H1 (cell line): ENCODE measurements at regions of chr21 and their contacts with region 1.

Region 1: DNA sequence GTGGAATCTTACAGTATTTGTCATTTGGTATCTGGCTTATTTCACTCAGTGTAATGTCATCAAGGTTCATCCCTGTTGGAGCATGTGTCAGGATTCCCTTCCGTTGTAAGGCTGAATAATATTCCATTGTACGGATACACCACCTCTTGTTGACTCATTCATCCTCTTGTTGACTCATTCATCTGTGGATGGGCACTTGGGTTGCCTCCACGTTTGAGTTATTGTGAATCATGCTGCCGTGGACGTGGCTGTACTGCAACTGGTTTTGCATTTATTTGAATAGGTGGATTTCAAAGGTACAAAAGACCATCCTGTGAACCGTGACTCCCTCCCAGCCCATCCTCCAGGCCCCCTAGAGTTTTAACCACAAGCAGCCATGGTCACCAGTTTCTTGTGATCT is 11.9 kb upstream of the TCP10L start:
- DNase-seq: no peak
- H3K4me3 ChIP-seq: no peak overlapping the region
- H3K27ac ChIP-seq: no peak overlapping the region
- H3K4me1 ChIP-seq: peaks cover 0 to 8% (median under 1%) of the 10 kb centered on the region in 4 experiments; a peak in 5 of 7 replicates
- H3K27me3 ChIP-seq: no peaks in the 10 kb centered on the region
- CTCF ChIP-seq: no peak
- EP300 ChIP-seq: no peak
- POLR2A ChIP-seq: no peak
- RAD21 ChIP-seq: no peak

Region 2: DNA sequence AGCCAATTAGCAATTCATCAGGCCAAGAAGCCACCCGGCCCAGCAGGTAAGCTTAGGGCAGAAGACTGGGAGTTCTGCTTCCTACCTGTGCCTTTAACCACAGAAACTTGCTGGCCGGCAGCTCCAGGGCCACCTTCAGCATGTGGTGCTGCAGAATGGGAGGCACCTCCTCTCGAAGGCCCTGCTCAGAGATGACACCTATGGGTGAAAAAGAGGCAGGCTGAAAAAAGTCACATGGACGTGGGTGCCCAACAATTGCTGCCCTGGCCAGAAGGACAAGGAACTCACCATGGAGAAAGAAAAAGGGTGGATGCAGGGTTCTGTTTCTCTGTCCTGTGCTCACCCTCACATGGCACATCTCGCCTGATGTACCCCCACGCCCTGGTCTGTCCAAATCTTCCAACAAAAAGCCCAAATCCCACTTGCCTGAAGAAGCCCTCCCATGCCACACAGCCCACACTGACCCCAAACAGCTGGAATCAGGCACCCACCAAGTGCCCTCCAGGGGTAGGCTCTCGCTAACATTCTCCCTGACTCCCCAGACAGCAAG is 237.4 kb before region 1 on chr21:
- CTCF ChIA-PET with region 1: interaction called, 11 read pairs
- POLR2A ChIA-PET with region 1: no interaction called
- DNase-seq: no peak
- H3K4me3 ChIP-seq: no peak overlapping the region
- H3K27ac ChIP-seq: no peak overlapping the region
- H3K4me1 ChIP-seq: no peaks in the 10 kb centered on the region
- H3K27me3 ChIP-seq: no peaks in the 10 kb centered on the region
- CTCF ChIP-seq: peak in 1 of 3 experiments; percentile 2; a peak in 1 of 4 replicates
- EP300 ChIP-seq: no peak
- POLR2A ChIP-seq: no peak
- RAD21 ChIP-seq: no peak

Region 3: GRCh38 chr21:32392880-32393676 is 204.1 kb before region 1 on chr21 and contains the start of gene URB1:
- CTCF ChIA-PET with region 1: interaction called, 10 read pairs
- POLR2A ChIA-PET with region 1: interaction called, 4 read pairs
- DNase-seq: peak; percentile 34 to 97
- H3K4me3 ChIP-seq: peak within 1 kb of the TSS; percentile 79 to 87 (median 81)
- H3K27ac ChIP-seq: no peak within 1 kb of the TSS
- H3K4me1 ChIP-seq: peaks cover 0 to 6% (median 5%) of the 10 kb centered on the region in 4 experiments
- H3K27me3 ChIP-seq: peaks cover 0 to 7% (median 6%) of the 10 kb centered on the region in 4 experiments; a peak in 5 of 7 replicates
- CTCF ChIP-seq: no peak
- EP300 ChIP-seq: no peak
- POLR2A ChIP-seq: peak in 1 of 2 experiments; percentile 68; a peak in 2 of 3 replicates
- RAD21 ChIP-seq: no peak
- total RNA-seq, gene URB1: 28.2 and 28.9 TPM in 2 replicates

Region 4: DNA sequence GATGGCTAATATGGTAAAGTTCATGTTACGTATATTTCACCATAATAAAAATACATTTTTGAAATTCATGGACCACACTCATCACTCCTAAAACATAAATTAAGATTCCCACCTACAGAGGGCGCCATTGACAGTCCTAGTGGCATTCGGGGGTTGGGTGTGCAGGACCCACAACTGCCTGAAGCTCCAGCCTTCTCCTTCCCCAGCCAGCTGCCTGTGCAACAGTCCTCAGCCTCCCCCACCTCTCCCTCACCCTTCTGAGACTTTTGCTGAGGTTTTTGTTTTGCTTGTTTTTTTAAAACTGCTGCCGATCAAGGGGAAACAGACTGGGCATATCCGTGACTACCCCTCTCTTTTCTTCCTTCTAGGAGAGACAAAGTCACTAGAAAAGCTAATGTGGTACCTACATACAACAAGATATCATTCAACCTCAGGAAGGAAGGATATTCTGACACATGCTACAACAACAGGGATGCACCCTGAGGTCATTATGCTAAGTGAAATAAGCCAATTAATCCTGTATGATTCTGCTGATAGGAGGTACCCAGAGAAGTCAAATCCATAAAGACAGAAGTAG is 193.9 kb before region 1 on chr21:
- CTCF ChIA-PET with region 1: interaction called, 68 read pairs
- POLR2A ChIA-PET with region 1: no interaction called
- DNase-seq: peak in 1 of 2 experiments; percentile 63
- H3K4me3 ChIP-seq: no peak overlapping the region
- H3K27ac ChIP-seq: no peak overlapping the region
- H3K4me1 ChIP-seq: no peaks in the 10 kb centered on the region; a peak in 1 of 7 replicates
- H3K27me3 ChIP-seq: no peaks in the 10 kb centered on the region
- CTCF ChIP-seq: peak; percentile 69 to 85 (median 82)
- EP300 ChIP-seq: no peak
- POLR2A ChIP-seq: no peak
- RAD21 ChIP-seq: peak; percentile 85 to 87

Region 5: GRCh38 chr21:32578107-32578692 is 19.0 kb before region 1 on chr21:
- CTCF ChIA-PET with region 1: interaction called, 24 read pairs
- POLR2A ChIA-PET with region 1: interaction called, 3 read pairs
- DNase-seq: peak; percentile 23 to 70
- H3K4me3 ChIP-seq: no peak overlapping the region
- H3K27ac ChIP-seq: no peak overlapping the region
- H3K4me1 ChIP-seq: no peaks in the 10 kb centered on the region
- H3K27me3 ChIP-seq: no peaks in the 10 kb centered on the region
- CTCF ChIP-seq: peak; percentile 75 to 94 (median 79)
- EP300 ChIP-seq: no peak
- POLR2A ChIP-seq: no peak
- RAD21 ChIP-seq: peak; percentile 79 to 84

Region 6: DNA sequence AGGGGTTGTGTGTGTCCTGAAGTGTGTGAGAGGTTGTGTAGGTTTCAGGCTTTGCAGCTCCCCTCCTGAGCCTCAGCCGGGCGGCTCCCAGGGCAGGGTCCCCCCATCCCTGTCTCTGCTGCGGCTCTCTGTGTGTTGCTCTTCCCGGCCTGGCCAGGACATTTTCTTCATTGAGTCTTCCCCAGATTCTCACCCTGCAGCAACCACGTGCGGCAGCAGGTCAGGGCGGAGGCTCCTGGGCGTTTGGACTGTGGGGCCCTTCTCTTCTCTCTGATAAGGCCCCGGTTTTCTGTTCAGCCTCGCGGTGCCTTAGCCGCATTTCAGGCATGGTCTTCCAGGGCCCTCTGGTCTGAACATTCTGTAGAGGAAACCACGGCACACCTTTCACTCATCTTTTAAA is 10.1 kb before region 1 on chr21:
- CTCF ChIA-PET with region 1: interaction called, 41 read pairs
- POLR2A ChIA-PET with region 1: interaction called, 6 read pairs
- DNase-seq: no peak
- H3K4me3 ChIP-seq: no peak overlapping the region
- H3K27ac ChIP-seq: no peak overlapping the region
- H3K4me1 ChIP-seq: 0 out of 7 replicates have a peak, but pooled peaks cover 0 to 2% (median 0%) of the 10 kb centered on the region in 4 experiments
- H3K27me3 ChIP-seq: no peaks in the 10 kb centered on the region; a peak in 1 of 7 replicates
- CTCF ChIP-seq: no peak
- EP300 ChIP-seq: no peak
- POLR2A ChIP-seq: no peak
- RAD21 ChIP-seq: no peak

Region 7: DNA sequence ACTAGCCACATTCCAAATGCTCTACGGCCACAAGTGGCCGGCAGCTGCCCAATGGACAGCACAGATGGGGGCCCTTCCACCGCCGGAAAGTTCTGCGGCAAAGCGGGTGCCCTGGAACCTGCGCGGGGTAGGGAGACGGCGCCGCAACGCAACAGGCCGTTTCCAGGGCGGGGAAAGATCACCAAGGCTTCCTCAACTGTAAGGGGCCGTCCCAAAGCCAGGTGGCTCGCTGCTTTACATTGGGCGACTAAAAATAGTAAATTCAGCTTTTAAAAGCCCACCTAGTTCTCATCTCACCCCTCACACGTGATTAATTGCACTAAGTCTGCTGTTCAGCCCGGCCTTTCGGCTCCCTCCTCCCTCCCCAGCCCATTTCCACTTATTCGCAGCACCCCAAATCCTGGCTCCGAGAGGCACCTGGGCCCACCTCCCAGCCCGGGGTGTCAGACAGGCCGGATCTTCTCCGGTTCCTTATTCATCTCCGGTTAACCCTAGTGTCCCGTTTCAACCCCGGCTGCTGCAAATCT is 14.3 kb after region 1 on chr21:
- CTCF ChIA-PET with region 1: interaction called, 16 read pairs
- POLR2A ChIA-PET with region 1: interaction called, 4 read pairs
- DNase-seq: no peak
- H3K4me3 ChIP-seq: peak overlapping the region; percentile 81 to 99 (median 96)
- H3K27ac ChIP-seq: no peak overlapping the region
- H3K4me1 ChIP-seq: no peaks in the 10 kb centered on the region; a peak in 2 of 7 replicates
- H3K27me3 ChIP-seq: no peaks in the 10 kb centered on the region
- CTCF ChIP-seq: no peak
- EP300 ChIP-seq: no peak
- POLR2A ChIP-seq: no peak
- RAD21 ChIP-seq: no peak